BJ (cell line): ENCODE measurements at regions of chr7 and their contacts with region 1.

Region 1: GRCh38 chr7:137446025-137446424 is 102.5 kb upstream of the PTN start:
- DNase-seq: no peak
- H3K4me3 ChIP-seq: no peak overlapping the region
- H3K27me3 ChIP-seq: no peaks in the 10 kb centered on the region
- CTCF ChIP-seq: no peak

Region 2: GRCh38 chr7:137328373-137329120 is 117.5 kb before region 1 on chr7:
- CTCF ChIA-PET with region 1: no interaction called
- POLR2A ChIA-PET with region 1: no interaction called
- DNase-seq: no peak
- H3K4me3 ChIP-seq: no peak overlapping the region
- H3K27me3 ChIP-seq: no peaks in the 10 kb centered on the region; the same call in 1 of the 2 replicates
- CTCF ChIP-seq: no peak

Region 3: GRCh38 chr7:137371616-137372015 is 74.4 kb before region 1 on chr7:
- CTCF ChIA-PET with region 1: no interaction called
- POLR2A ChIA-PET with region 1: no interaction called
- DNase-seq: no peak
- H3K4me3 ChIP-seq: no peak overlapping the region
- H3K27me3 ChIP-seq: no peaks in the 10 kb centered on the region
- CTCF ChIP-seq: no peak

Region 4: GRCh38 chr7:138911007-138911406 is 1465.0 kb after region 1 on chr7:
- CTCF ChIA-PET with region 1: no interaction called
- POLR2A ChIA-PET with region 1: interaction called, 23 read pairs
- DNase-seq: no peak
- H3K4me3 ChIP-seq: no peak overlapping the region
- H3K27me3 ChIP-seq: no peaks in the 10 kb centered on the region
- CTCF ChIP-seq: no peak